ENCODE measurements at regions of chr22 and their contacts with region 1.

Region 1: DNA sequence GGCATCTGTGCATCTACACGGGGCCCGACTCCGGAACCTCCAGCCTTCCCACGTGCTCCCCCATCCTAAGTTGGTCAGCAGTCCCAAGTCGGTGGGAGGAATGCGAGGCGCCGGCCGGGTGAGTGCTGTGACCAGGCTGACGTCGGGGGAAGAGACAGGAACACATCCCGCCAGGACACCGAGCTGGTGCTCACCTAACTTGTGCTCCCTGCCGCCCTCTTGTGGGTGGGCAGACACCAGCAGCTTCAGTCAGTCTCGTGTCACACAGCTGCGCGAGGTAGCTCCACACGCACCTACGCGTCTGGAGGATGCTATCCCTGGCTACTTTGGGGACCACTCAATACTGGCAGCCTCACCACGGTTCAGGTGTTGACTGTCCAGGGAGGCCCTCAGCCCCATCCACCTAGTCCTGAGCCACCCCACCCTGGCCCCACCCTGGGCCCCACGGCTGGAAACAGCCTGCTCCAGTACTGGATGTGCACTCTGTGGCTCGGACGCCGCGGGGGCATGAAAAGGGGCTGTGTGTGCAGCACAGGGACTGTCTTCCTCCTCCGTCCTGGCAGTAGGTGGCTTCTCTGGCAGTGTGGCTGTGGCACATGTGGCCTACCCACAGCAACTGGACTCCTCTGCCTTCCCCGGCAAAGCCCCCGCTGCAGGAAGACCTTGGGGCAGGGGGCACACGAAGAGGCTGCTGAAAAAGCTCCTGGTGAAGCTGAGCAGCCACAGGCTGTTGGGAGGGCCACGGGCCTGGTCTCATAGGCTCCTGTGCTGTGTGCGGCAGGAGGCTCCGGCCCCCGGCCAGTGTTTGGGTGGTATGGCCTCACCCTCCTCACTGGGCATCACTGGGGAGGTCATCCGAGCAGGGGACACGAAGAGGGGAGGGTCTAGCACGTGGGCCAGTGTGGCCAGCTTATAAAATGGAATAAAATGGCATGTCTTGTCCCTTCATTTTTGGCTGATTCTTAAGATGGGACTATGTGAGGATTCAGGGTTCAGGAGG is 11.2 kb upstream of the BID start:
- DNase-seq: peak; percentile 95
- ATAC-seq: peak; percentile 82
- H3K4me3 Mint-ChIP-seq: no peak overlapping the region
- H3K27ac Mint-ChIP-seq: no peak overlapping the region
- H3K4me1 Mint-ChIP-seq: peaks cover 10% of the 10 kb centered on the region
- H3K27me3 Mint-ChIP-seq: no peaks in the 10 kb centered on the region; the same call in 1 of the 2 replicates
- CTCF ChIP-seq: peak; percentile 65; the same call in 1 of the 2 replicates

Region 2: GRCh38 chr22:17576470-17576869 is 209.0 kb before region 1 on chr22:
- CTCF ChIA-PET with region 1: no interaction called
- POLR2A ChIA-PET with region 1: no interaction called
- DNase-seq: no peak
- ATAC-seq: no peak
- H3K4me3 Mint-ChIP-seq: no peak overlapping the region
- H3K27ac Mint-ChIP-seq: no peak overlapping the region
- H3K4me1 Mint-ChIP-seq: 0 out of 2 replicates have a peak, but pooled peaks cover 7% of the 10 kb centered on the region
- H3K27me3 Mint-ChIP-seq: no peaks in the 10 kb centered on the region
- CTCF ChIP-seq: no peak

Region 3: DNA sequence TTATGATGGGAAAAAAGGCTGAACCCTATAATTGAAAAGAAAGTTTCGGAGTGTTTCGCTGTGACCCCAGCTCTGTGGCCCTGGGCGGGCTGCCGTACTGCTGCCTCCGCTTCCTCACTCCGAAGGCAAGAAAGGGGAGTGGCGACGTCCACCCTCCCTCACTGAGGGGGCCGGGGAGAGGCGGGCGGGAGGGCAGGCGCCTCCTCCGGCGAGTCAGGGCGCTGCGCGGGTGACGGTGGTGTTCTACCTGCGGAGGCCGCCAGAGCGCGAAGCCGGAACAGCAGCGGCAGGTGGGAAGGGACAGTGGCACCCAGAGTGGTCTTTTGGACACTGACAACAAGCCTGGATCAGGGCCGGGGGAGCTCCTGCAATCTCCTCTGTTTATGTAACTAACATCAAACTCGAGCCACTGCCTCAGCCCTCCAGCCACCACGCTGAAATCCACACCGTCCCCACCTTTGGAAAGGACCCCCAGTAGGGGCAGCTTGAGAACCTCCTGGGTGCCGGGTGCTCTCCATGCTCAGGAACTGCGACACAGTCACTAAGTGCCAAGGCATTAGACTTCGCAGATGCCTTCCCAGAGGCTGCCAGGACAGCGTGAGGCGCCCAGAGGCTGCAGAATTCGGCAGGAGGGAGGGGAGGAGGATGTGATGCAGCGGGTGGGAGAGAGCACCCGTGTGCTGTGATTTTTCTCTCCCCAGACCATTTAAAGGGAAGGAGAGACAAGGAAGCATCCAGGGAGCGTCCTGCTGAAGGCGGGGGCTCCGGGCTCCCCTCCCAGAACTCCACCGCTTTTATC is 36.7 kb before region 1 on chr22:
- CTCF ChIA-PET with region 1: interaction called, 302 read pairs
- POLR2A ChIA-PET with region 1: interaction called, 3 read pairs
- DNase-seq: peak; percentile 80
- ATAC-seq: peak; percentile 85
- H3K4me3 Mint-ChIP-seq: no peak overlapping the region
- H3K27ac Mint-ChIP-seq: no peak overlapping the region
- H3K4me1 Mint-ChIP-seq: peaks cover 8% of the 10 kb centered on the region
- H3K27me3 Mint-ChIP-seq: no peaks in the 10 kb centered on the region
- CTCF ChIP-seq: peak; percentile 20; the same call in 1 of the 2 replicates

Region 4: GRCh38 chr22:17754233-17754925 is 31.1 kb before region 1 on chr22:
- CTCF ChIA-PET with region 1: interaction called, 63 read pairs
- POLR2A ChIA-PET with region 1: no interaction called
- DNase-seq: peak; percentile 59
- ATAC-seq: peak; percentile 81
- H3K4me3 Mint-ChIP-seq: no peak overlapping the region
- H3K27ac Mint-ChIP-seq: no peak overlapping the region
- H3K4me1 Mint-ChIP-seq: no peaks in the 10 kb centered on the region
- H3K27me3 Mint-ChIP-seq: no peaks in the 10 kb centered on the region
- CTCF ChIP-seq: peak; percentile 37; the same call in 1 of the 2 replicates

Region 5: GRCh38 chr22:17773606-17774205 is 11.8 kb before region 1 on chr22:
- CTCF ChIA-PET with region 1: interaction called, 92 read pairs
- POLR2A ChIA-PET with region 1: interaction called, 13 read pairs
- DNase-seq: peak; percentile 73
- ATAC-seq: peak; percentile 78
- H3K4me3 Mint-ChIP-seq: peak overlapping the region; percentile 70
- H3K27ac Mint-ChIP-seq: no peak overlapping the region
- H3K4me1 Mint-ChIP-seq: peaks cover 20% of the 10 kb centered on the region
- H3K27me3 Mint-ChIP-seq: peaks cover 5% of the 10 kb centered on the region; the same call in 1 of the 2 replicates
- CTCF ChIP-seq: no peak

Region 6: DNA sequence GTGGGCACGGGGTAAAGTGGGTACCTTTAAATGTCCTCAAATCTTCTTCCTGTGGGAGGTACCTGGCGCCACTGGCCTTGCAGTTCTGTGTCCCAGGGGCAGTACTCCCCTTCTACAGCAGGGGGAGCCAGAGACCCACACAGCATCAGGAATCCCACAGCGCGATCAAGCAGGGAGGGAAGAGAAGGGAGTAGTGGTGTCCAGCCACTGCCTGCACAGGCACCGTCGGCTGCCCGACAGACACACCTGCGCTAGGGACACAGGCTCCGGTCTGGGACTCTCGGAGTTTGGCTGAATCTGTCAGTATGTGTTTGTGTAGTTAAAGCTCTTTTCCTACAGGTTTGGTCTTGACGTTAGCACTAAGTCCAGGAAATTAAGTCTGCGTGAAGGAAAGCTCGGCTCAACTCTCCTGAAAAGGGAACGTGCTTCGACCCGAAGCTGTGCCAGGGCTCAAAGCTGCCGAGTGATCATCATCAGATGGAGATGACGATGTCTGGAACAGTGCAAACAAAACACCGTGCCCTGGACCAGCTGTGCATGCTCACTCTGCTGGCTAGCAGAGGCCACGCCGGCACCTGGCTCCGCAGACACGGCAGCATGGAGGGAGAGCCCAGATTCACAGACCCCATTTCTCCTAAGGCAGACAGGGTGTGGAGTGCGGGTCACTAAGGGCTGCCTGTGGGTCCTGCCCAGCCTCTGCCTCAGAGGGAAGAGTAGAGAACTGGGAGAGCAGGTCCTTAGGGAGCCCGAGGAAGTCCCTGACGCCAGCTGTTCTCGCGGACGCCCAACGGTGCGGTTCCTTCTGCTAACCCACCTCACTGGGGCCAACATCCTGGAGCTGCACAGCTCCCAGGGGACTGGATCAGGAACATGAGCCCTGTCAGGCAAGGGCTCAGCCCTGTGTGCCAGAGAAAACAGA is 44.8 kb after region 1 on chr22:
- CTCF ChIA-PET with region 1: interaction called, 13 read pairs
- POLR2A ChIA-PET with region 1: no interaction called
- DNase-seq: peak; percentile 94
- ATAC-seq: peak; percentile 95
- H3K4me3 Mint-ChIP-seq: no peak overlapping the region
- H3K27ac Mint-ChIP-seq: no peak overlapping the region
- H3K4me1 Mint-ChIP-seq: no peaks in the 10 kb centered on the region
- H3K27me3 Mint-ChIP-seq: no peaks in the 10 kb centered on the region
- CTCF ChIP-seq: peak; percentile 97